ENCODE measurements at regions of chr9 and their contacts with region 1.

Region 1: DNA sequence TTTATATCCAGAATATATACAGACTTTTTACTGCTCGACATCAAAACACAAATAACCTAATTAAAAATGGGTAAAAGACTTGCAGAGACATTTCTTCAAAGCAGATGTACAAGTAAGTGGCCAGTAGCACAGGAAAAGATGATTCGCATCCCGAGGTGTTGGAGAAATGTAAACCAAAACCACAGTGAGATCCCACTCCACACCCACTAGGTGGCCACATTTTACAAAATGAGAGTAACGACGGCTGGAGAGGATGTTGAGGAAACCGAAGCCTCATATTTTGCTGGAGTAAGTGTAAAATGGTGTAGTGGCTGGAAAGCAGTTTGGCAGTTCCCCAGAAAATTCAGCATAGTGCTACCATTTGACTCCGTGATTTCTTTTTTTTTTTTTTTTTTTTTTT is 21.2 kb upstream of the GBGT1 start:
- DNase-seq: peak; percentile 64
- ATAC-seq: peak; percentile 68
- H3K4me3 ChIP-seq: 0 out of 4 replicates have a peak overlapping the region, but pooled peaks of 1 of the 2 experiments have one; percentile 3
- H3K27ac ChIP-seq: no peak overlapping the region
- H3K4me1 ChIP-seq: peaks cover 7 to 24% of the 10 kb centered on the region in 2 experiments; a peak in 3 of 4 replicates
- H3K27me3 ChIP-seq: no peaks in the 10 kb centered on the region
- CTCF ChIP-seq: peak; percentile 62 to 84 (median 69)
- POLR2A ChIP-seq: no peak
- RAD21 ChIP-seq: peak; percentile 82

Region 2: DNA sequence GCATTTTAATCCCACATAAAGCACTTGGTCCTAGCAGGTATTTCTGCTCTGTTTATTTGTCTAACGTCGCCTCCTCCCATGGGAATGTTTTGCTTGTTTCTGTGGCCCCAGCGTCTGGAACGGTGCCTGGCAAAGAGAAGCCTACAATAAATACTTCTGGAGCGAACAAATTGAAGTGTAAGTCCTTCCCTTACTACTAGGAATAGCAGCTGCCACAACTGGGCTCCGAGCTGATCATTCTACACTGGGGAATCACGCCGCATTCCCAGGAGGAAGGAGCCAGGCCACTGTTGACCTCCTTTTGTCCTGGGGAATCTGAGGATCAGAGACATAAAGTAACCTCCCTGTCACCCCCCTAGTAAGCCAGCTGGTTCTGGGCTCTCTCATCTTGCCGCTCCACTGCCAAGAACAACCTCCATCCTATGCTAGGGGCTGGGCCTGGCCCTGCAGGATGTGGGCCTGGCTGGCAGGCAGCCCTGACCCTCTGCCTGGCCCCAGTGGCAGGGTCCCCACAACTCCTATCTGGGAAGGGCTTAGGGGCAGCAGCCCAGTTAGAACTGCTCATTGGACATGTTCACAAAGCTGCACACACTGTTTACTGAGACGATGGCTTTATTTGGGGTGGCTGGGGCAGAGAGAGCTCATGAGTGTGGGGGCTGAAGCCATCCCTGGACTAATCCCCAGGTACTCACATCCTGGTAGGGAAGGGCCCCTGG is 431.9 kb before region 1 on chr9:
- CTCF ChIA-PET with region 1: no interaction called
- POLR2A ChIA-PET with region 1: no interaction called
- RAD21 ChIA-PET with region 1: no interaction called
- intact Hi-C with region 1: no loop called
- DNase-seq: no peak
- ATAC-seq: no peak
- H3K4me3 ChIP-seq: no peak overlapping the region
- H3K27ac ChIP-seq: no peak overlapping the region
- H3K4me1 ChIP-seq: no peaks in the 10 kb centered on the region
- H3K27me3 ChIP-seq: no peaks in the 10 kb centered on the region
- CTCF ChIP-seq: no peak
- POLR2A ChIP-seq: no peak
- RAD21 ChIP-seq: no peak

Region 3: DNA sequence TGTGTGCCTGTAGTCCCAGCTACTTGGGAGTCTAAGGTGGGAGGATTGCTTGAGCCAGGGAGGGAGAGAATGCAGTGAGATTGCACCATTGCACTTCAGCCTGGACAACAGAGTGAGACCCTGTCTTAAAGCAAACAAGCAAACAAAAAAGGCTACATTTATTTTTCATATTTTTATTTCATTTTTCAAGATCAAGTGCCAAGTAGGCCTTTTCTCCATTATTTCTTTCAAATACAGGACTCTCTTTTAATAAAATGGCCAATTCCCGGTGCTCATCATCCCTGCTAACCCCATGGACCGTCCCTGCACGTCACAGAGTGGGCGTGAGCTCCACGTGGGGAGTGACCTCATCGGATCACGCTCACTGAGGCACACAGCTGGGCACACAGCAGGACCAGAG is 11.9 kb before region 1 on chr9:
- CTCF ChIA-PET with region 1: interaction called, 19 read pairs
- POLR2A ChIA-PET with region 1: no interaction called
- RAD21 ChIA-PET with region 1: no interaction called
- intact Hi-C with region 1: no loop called
- DNase-seq: no peak
- ATAC-seq: no peak
- H3K4me3 ChIP-seq: no peak overlapping the region
- H3K27ac ChIP-seq: no peak overlapping the region
- H3K4me1 ChIP-seq: no peaks in the 10 kb centered on the region
- H3K27me3 ChIP-seq: 0 out of 2 replicates have a peak, but pooled peaks cover 4% of the 10 kb centered on the region
- CTCF ChIP-seq: no peak
- POLR2A ChIP-seq: no peak
- RAD21 ChIP-seq: no peak

Region 4: GRCh38 chr9:133202688-133203453 is 17.9 kb after region 1 on chr9:
- CTCF ChIA-PET with region 1: interaction called, 13 read pairs
- POLR2A ChIA-PET with region 1: no interaction called
- RAD21 ChIA-PET with region 1: no interaction called
- intact Hi-C with region 1: no loop called
- DNase-seq: no peak
- ATAC-seq: no peak
- H3K4me3 ChIP-seq: no peak overlapping the region
- H3K27ac ChIP-seq: no peak overlapping the region
- H3K4me1 ChIP-seq: no peaks in the 10 kb centered on the region; a peak in 1 of 4 replicates
- H3K27me3 ChIP-seq: no peaks in the 10 kb centered on the region
- CTCF ChIP-seq: no peak
- POLR2A ChIP-seq: no peak
- RAD21 ChIP-seq: no peak

Region 5: DNA sequence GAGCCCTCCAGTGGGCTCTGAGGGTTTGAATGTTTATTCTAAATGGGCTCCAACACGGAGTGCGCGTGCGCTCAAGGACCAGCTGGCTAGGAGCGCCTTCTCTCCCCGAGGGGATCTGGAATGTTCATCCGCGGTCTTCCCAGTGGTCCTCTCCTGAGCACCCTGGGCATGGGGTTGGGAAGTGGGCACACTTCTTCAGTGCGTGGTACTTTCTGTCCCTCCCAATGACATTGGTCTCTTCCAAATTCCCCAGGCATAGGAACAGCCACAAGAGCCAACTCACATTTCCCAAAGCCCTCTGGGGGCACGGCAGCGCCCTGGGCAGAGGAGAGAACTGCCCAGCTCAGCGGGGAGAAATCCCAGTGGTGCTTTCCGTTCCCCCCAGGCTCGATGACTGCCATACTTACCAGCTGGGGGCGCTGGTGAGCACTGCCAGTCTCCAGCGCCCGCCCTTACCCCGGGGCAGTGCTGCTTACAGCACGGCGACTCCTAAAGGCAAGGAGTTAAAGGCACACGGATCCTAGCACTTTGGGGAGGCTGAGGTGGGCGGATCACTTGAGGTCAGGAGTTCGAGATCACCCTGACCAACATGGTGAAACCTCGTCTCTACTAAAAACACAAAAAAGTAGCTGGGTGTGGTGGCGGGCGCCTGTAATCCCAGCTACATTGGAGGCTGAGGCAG is 54.0 kb after region 1 on chr9:
- CTCF ChIA-PET with region 1: interaction called, 31 read pairs
- POLR2A ChIA-PET with region 1: interaction called, 3 read pairs
- RAD21 ChIA-PET with region 1: interaction called in 1 of 2 experiments, 3 read pairs
- intact Hi-C with region 1: loop called (anchors 2 kb)
- DNase-seq: peak; percentile 88
- ATAC-seq: peak; percentile 88
- H3K4me3 ChIP-seq: peak overlapping the region; percentile 38 to 57
- H3K27ac ChIP-seq: peak overlapping the region; percentile 79
- H3K4me1 ChIP-seq: peaks cover 16 to 19% of the 10 kb centered on the region in 2 experiments; a peak in 3 of 4 replicates
- H3K27me3 ChIP-seq: no peaks in the 10 kb centered on the region
- CTCF ChIP-seq: peak; percentile 92 to 99 (median 96)
- POLR2A ChIP-seq: no peak
- RAD21 ChIP-seq: peak; percentile 80

Region 6: DNA sequence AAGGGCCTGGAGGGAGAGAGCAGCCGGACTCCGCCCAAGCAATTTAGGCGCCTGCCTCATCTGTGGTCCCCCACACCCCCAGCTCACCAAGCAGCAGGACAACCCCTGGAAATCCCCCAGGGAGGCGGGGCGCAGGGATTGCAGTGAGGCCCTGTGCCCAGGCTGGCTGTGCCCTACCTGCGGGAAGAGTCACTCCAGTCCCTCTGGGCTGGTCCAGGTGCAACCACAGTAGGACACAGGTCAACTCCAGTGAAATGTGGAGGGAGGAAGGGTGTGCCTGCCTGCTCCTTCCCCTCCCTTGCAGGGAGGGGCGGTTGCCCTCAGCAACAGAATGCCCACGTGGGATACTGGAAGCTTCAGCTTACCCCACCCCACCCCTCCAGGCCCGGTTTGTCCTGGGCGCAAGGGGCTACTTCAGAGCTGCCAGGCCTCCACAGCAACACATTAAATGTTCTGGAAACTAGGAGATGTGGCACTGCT is 67.4 kb after region 1 on chr9:
- CTCF ChIA-PET with region 1: no interaction called
- POLR2A ChIA-PET with region 1: no interaction called
- RAD21 ChIA-PET with region 1: no interaction called
- intact Hi-C with region 1: no loop called
- DNase-seq: peak; percentile 27
- ATAC-seq: peak; percentile 85
- H3K4me3 ChIP-seq: peak overlapping the region; percentile 25 to 35
- H3K27ac ChIP-seq: peak overlapping the region; percentile 61
- H3K4me1 ChIP-seq: peaks cover 31 to 36% of the 10 kb centered on the region in 2 experiments
- H3K27me3 ChIP-seq: no peaks in the 10 kb centered on the region
- CTCF ChIP-seq: no peak
- POLR2A ChIP-seq: no peak
- RAD21 ChIP-seq: no peak

Region 7: DNA sequence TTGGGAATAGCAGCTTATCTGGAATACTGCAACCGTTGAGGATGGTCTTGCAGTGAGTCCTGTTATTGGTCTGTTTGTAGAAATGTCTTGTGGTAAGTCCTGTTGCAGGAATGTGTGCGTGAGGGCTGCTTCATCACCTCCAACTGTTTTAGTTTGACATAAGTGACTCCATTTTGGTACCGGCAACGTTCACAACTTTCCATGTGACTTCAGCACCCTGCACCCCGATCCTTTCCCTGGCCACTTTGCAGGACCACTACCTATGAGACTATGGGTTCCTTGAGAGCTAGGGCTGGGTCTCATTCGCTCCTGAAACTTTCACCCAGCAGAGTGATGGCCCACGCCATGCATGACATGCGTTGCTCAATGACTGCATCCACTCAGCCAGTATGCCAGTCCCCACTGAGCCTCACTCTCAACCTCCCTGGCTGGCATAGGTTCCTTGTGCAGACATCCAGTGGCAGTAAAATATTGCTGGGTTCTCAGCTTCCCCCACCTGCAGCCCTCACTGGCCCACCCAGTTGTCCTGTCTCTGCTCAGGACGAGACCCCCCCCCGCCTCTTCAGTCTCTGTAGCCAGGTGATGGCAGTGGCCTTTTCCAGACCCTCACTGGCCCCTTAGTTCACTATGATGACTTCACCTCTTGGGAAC is 143.0 kb after region 1 on chr9:
- CTCF ChIA-PET with region 1: interaction called, 37 read pairs
- POLR2A ChIA-PET with region 1: interaction called, 6 read pairs
- RAD21 ChIA-PET with region 1: interaction called, 3 to 11 read pairs
- intact Hi-C with region 1: loop called (anchors 1 kb)
- DNase-seq: no peak
- ATAC-seq: no peak
- H3K4me3 ChIP-seq: no peak overlapping the region
- H3K27ac ChIP-seq: no peak overlapping the region
- H3K4me1 ChIP-seq: peaks cover 0 to 5% of the 10 kb centered on the region in 2 experiments; a peak in 2 of 4 replicates
- H3K27me3 ChIP-seq: no peaks in the 10 kb centered on the region
- CTCF ChIP-seq: no peak
- POLR2A ChIP-seq: no peak
- RAD21 ChIP-seq: no peak

Region 8: GRCh38 chr9:133406480-133407307 is 221.7 kb after region 1 on chr9:
- CTCF ChIA-PET with region 1: interaction called, 14 read pairs
- POLR2A ChIA-PET with region 1: no interaction called
- RAD21 ChIA-PET with region 1: no interaction called
- intact Hi-C with region 1: no loop called
- DNase-seq: peak; percentile 47
- ATAC-seq: peak; percentile 85
- H3K4me3 ChIP-seq: no peak overlapping the region
- H3K27ac ChIP-seq: no peak overlapping the region
- H3K4me1 ChIP-seq: peaks cover 0 to 5% of the 10 kb centered on the region in 2 experiments; a peak in 1 of 4 replicates
- H3K27me3 ChIP-seq: no peaks in the 10 kb centered on the region
- CTCF ChIP-seq: peak; percentile 81 to 96 (median 93)
- POLR2A ChIP-seq: no peak
- RAD21 ChIP-seq: peak; percentile 67